ENCODE measurements at regions of chr3 and their contacts with region 1.

Region 1: DNA sequence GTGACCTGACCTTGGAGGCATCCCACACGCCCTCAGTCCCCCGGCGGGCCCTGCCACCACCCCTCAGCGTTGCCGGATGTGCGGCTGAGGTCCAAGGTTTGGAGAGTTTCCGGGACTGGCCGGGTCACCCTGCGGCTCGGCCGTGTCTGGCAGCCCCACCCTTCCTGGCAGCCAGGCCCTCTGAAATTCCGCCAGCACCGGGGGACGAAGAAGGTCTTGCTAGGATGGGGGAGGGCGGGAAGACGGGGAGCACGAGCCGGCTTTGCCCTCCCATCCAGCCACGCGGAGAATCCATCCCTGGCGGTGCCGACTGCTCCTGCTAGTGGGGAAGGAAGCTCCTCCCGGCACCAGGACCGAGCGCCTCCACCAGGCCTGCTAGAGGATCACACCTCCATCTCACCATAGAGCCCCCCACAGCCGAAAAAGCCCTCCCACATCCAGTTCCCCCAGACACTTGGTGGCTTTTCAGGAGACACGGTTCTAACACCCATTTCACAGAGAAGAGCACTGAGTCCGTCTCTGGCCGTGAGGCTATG is 81.5 kb downstream of the CPN2 start:
- DNase-seq: peak in 7 of 10 donors; percentile 27 to 89 (median 62)

Region 2: DNA sequence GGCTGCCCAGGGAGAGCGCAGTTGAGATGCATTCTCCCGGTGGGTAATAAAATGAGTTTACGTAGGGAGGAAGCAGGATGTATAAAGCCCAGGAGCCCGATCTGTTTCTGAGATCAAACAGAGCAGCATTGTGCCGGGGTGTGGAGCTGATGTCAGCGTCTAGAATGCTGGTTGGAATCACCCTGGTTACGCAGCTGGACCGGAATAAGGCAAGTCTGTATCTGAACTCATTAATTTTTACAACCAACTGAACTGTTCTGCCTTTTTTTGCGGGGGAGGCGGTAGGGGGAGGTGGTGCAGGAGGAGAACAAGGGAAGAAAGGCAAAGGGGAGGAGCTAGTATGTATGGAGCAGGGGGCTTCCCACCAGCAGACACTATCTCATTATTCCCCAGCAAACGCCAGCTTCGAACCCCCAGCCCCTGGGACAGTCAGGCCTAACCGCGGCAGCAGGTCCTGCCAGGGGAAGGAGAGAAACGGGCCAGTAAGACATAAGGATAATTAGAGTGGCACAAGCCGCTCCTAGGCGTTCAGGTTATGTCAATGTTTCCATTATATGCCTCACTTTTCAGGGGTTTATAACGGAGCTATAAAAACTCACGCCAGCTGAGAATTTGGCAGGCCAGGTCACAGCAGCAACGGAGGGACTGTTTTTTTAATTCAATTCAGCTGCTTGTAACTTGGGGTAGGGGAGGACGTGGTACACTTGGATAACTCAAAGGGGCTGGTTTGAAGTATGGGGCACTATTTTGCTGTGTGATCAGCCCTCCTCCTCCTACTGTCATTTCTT is 309.0 kb before region 1 on chr3:
- intact Hi-C with region 1: no loop called
- DNase-seq: peak in 5 of 10 donors; percentile 23 to 48 (median 33)

Region 3: DNA sequence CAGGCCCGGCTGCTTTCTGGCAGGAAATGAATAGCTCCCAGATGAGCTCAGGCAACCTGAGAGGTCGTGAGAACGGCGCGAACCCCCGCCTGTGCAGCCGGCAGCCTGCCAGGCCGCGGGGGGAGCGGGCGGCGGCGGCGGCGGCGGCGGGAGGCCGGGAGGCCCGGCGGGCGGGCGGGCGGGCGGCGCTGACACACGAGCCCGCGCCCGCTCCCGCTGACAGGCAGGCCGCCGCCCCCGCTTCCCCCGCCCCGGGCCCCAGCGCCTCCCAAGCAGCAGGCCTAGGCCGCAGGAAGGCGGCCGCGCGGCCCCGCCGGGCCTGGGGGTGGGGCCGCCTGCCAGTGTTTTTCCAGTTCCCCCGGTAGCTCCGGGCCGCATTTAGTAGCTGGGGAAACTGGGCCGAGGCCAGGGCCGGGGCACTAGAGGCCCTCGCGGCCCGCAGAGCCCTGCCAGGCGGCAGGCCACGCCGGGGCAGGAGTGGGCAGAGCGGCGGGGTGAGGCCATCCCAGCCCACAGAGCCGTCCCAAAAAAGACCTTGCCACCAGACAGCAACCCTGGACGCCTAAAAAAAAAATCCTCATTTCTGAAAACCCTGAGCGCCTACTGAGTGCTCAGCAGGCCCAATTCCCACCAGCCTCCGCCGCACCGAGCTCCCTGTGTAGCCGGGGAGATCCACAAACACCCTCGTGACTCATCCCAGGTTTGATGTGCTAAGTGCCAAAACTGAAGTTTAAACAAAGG is 128.1 kb before region 1 on chr3:
- intact Hi-C with region 1: loop called (anchors 1 kb)
- DNase-seq: peak; percentile 60 to 95 (median 80)